B cell (primary cell): ENCODE measurements at regions of chr11 and their contacts with region 1.

Region 1: GRCh38 chr11:447923-448731 is 2.0 kb upstream of the PTDSS2 start:
- DNase-seq: peak; percentile 95
- ATAC-seq: peak; percentile 73
- H3K4me3 ChIP-seq: peak overlapping the region; percentile 53 to 85 (median 69)
- H3K4me3 Mint-ChIP-seq: peak overlapping the region; percentile 98
- H3K27ac ChIP-seq: peak overlapping the region; percentile 88 to 93
- H3K27ac Mint-ChIP-seq: peak overlapping the region; percentile 96
- H3K4me1 ChIP-seq: peaks cover 29 to 43% of the 10 kb centered on the region in 2 donors
- H3K4me1 Mint-ChIP-seq: peaks cover 26% of the 10 kb centered on the region
- H3K27me3 ChIP-seq: no peaks in the 10 kb centered on the region
- H3K27me3 Mint-ChIP-seq: no peaks in the 10 kb centered on the region
- CTCF ChIP-seq: peak; percentile 74

Region 2: DNA sequence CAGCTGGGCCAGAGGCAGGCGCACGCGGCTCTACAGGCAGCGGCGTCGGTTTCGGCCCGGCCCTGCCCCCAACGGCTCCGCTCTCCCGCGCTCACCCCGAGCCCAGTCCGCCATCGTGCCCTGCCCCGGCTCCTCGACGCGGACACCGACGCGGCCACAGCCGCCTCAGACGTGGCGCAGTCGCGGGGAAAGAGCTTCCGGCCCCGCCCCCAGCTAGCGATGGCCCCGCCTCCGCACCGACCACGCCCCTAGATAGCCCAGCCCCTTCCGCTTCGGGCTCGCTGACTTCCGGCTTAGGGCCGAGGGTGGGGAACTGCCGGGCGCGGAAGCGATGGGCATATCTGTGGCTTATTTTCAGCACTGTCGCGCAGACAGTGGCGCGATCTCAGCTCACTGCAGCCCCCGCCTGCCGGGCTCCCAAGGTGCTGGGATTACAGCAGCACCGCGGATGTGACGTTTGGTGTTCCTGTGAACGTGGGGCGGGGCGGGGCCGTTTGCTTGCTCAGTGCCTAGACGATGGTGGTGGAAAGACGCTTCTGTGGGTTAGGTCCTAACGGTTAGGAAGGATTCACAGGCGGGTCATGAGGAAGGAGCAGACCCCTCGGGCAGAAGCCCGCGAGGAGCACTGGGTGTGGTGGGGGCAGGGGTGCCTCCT is 240.8 kb before region 1 on chr11 and contains the starts of genes BET1L and RIC8A:
- CTCF ChIA-PET with region 1: interaction called, 33 read pairs
- POLR2A ChIA-PET with region 1: interaction called, 10 read pairs
- intact Hi-C with region 1: loop called (anchors 1 kb)
- DNase-seq: peak; percentile 99
- ATAC-seq: peak; percentile 79
- H3K4me3 ChIP-seq: peak within 1 kb of the TSS; percentile 87 to 98 (median 91)
- H3K4me3 Mint-ChIP-seq: peak within 1 kb of the TSS; percentile 98
- H3K27ac ChIP-seq: peak within 1 kb of the TSS; percentile 96 to 98
- H3K27ac Mint-ChIP-seq: peak within 1 kb of the TSS; percentile 100
- H3K4me1 ChIP-seq: peaks cover 26 to 43% of the 10 kb centered on the region in 2 donors
- H3K4me1 Mint-ChIP-seq: peaks cover 53% of the 10 kb centered on the region
- H3K27me3 ChIP-seq: no peaks in the 10 kb centered on the region
- H3K27me3 Mint-ChIP-seq: no peaks in the 10 kb centered on the region
- CTCF ChIP-seq: no peak
- total RNA-seq, gene BET1L: 69.1 and 72.2 TPM in 2 replicates
- total RNA-seq, gene RIC8A: 102 and 110 TPM in 2 replicates

Region 3: DNA sequence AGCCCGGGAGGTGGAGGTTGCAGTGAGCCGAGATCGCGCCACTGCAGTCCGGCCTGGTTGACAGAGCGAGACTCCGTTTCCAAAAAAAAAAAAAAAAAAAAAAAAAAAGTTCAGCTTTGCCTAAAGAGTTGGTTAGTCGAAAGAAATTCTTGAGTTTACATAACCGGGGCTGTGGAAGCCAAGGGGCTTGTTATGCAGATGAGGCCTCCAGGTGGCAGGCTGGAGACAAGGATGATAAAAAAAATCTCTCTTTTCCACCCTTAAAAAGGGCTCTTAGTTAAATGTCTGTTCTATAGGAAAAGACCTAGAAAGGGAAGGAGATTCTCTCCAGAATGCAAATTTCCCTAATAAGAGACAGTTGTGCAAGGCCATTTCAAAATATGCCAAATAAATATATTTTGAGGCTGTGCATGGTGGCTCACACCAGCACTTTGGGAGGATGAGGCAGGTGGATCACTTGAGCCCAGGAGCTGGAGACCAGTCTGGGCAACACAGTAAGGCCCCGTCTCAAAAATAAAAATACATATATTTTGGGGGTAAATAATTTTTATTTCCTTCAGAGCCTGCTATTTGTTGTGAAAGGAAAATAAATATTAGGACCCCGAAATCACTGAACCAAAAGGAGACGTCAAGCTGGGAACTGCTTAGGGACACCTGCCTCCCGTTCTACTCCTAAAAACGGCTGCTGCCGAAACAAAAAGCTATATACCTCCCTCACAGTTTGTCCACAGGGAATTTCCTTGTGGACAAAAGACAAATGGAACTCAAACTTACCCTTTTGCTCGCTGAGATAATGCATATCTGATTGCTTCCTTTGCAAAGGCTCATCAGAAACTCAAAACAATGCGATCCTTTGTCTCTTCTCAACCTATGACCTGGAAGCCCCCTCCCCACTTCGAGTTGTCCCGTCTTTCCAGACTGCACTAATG is 142.9 kb before region 1 on chr11:
- CTCF ChIA-PET with region 1: interaction called, 21 read pairs
- POLR2A ChIA-PET with region 1: no interaction called
- intact Hi-C with region 1: loop called (anchors 2 kb)
- DNase-seq: peak; percentile 71
- ATAC-seq: peak; percentile 37
- H3K4me3 ChIP-seq: no peak overlapping the region
- H3K4me3 Mint-ChIP-seq: no peak overlapping the region
- H3K27ac ChIP-seq: no peak overlapping the region
- H3K27ac Mint-ChIP-seq: peak overlapping the region; percentile 73
- H3K4me1 ChIP-seq: peaks cover 28 to 56% of the 10 kb centered on the region in 2 donors
- H3K4me1 Mint-ChIP-seq: peaks cover 52% of the 10 kb centered on the region
- H3K27me3 ChIP-seq: peaks cover 0 to 2% (median 0%) of the 10 kb centered on the region in 4 experiments
- H3K27me3 Mint-ChIP-seq: no peaks in the 10 kb centered on the region
- CTCF ChIP-seq: peak; percentile 67

Region 4: GRCh38 chr11:406978-407739 is 41.0 kb before region 1 on chr11:
- CTCF ChIA-PET with region 1: interaction called, 34 read pairs
- POLR2A ChIA-PET with region 1: interaction called, 23 read pairs
- intact Hi-C with region 1: loop called (anchors 1 kb)
- DNase-seq: peak; percentile 94
- ATAC-seq: peak; percentile 83
- H3K4me3 ChIP-seq: peak overlapping the region in 4 of 5 experiments; percentile 40 to 63 (median 54)
- H3K4me3 Mint-ChIP-seq: peak overlapping the region; percentile 63
- H3K27ac ChIP-seq: peak overlapping the region; percentile 25 to 67
- H3K27ac Mint-ChIP-seq: peak overlapping the region; percentile 56
- H3K4me1 ChIP-seq: peaks cover 7 to 19% of the 10 kb centered on the region in 2 donors
- H3K4me1 Mint-ChIP-seq: peaks cover 7% of the 10 kb centered on the region
- H3K27me3 ChIP-seq: peaks cover 0 to 11% (median 0%) of the 10 kb centered on the region in 4 experiments
- H3K27me3 Mint-ChIP-seq: no peaks in the 10 kb centered on the region
- CTCF ChIP-seq: no peak

Region 5: GRCh38 chr11:506238-506994 is 58.3 kb after region 1 on chr11:
- CTCF ChIA-PET with region 1: interaction called, 10 read pairs
- POLR2A ChIA-PET with region 1: interaction called, 26 read pairs
- intact Hi-C with region 1: loop called (anchors 1 kb)
- DNase-seq: peak; percentile 97
- ATAC-seq: peak; percentile 70
- H3K4me3 ChIP-seq: peak overlapping the region; percentile 38 to 100 (median 98)
- H3K4me3 Mint-ChIP-seq: peak overlapping the region; percentile 99
- H3K27ac ChIP-seq: peak overlapping the region; percentile 100
- H3K27ac Mint-ChIP-seq: peak overlapping the region; percentile 100
- H3K4me1 ChIP-seq: peaks cover 28 to 45% of the 10 kb centered on the region in 2 donors
- H3K4me1 Mint-ChIP-seq: peaks cover 38% of the 10 kb centered on the region
- H3K27me3 ChIP-seq: peaks cover 0 to 10% (median 0%) of the 10 kb centered on the region in 4 experiments
- H3K27me3 Mint-ChIP-seq: no peaks in the 10 kb centered on the region
- CTCF ChIP-seq: no peak

Region 6: DNA sequence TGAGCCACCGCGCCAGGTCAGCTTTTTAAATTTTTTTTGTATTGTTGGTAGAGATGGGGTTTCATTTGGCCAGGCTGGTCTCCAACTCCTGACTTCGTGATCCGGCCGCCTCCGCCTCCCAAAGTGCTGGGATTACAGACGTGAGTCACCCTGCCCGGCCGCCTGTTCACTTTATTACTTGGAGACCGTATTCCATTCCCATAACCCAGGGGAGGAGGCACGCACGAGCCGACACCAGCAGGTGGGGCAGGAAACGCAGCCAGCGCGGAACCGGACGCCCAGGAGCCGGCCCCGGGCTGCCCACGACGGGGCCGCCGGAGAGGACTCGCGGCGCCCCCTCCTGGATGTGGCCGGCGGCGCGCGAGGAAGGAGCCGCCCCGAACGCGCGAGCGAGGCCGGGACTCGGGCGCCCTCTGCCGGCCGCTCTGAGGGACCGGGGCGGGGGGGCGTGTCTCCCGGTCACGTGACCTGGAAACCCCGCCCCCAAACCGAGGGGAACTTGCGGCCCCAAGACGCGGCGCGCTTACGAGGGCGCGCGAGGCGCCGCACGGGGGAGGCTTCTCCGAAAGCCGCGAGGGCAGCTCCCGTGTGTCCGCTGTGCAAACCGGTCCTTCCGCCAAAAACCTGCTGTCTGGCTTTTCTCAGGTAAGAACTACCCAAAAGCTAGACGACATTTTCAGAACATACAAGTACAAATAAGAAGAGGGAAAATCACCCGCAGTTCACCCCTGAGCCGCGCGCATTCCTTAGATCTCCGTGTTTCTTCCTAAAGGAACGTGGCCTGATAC is 70.5 kb after region 1 on chr11:
- CTCF ChIA-PET with region 1: interaction called, 10 read pairs
- POLR2A ChIA-PET with region 1: no interaction called
- intact Hi-C with region 1: no loop called
- DNase-seq: peak; percentile 96
- ATAC-seq: peak; percentile 97
- H3K4me3 ChIP-seq: peak overlapping the region in 4 of 5 experiments; percentile 21 to 44 (median 40)
- H3K4me3 Mint-ChIP-seq: peak overlapping the region; percentile 86
- H3K27ac ChIP-seq: peak overlapping the region in 1 of 2 donors; percentile 36
- H3K27ac Mint-ChIP-seq: peak overlapping the region; percentile 83
- H3K4me1 ChIP-seq: peaks cover 3 to 4% of the 10 kb centered on the region in 2 donors
- H3K4me1 Mint-ChIP-seq: peaks cover 9% of the 10 kb centered on the region
- H3K27me3 ChIP-seq: no peaks in the 10 kb centered on the region
- H3K27me3 Mint-ChIP-seq: no peaks in the 10 kb centered on the region
- CTCF ChIP-seq: peak; percentile 100

Region 7: GRCh38 chr11:798093-798713 is 350.1 kb after region 1 on chr11 and contains the start of gene SLC25A22:
- CTCF ChIA-PET with region 1: no interaction called
- POLR2A ChIA-PET with region 1: no interaction called
- intact Hi-C with region 1: loop called (anchors 10 kb)
- DNase-seq: peak; percentile 94
- ATAC-seq: peak; percentile 78
- H3K4me3 ChIP-seq: peak within 1 kb of the TSS; percentile 19 to 95 (median 93)
- H3K4me3 Mint-ChIP-seq: peak within 1 kb of the TSS; percentile 95
- H3K27ac ChIP-seq: peak within 1 kb of the TSS; percentile 83 to 93
- H3K27ac Mint-ChIP-seq: peak within 1 kb of the TSS; percentile 92
- H3K4me1 ChIP-seq: peaks cover 17 to 35% of the 10 kb centered on the region in 2 donors
- H3K4me1 Mint-ChIP-seq: peaks cover 20% of the 10 kb centered on the region
- H3K27me3 ChIP-seq: no peaks in the 10 kb centered on the region
- H3K27me3 Mint-ChIP-seq: no peaks in the 10 kb centered on the region
- CTCF ChIP-seq: peak; percentile 85
- total RNA-seq, gene SLC25A22: 25.7 and 28.2 TPM in 2 replicates